ENCODE measurements at regions of chr11 and their contacts with region 1.

Region 1: GRCh38 chr11:128172046-128172878 is 415.1 kb downstream of the ETS1 start:
- DNase-seq: peak; percentile 65 to 74
- ATAC-seq: peak; percentile 64 to 92; a peak in 5 of 6 replicates
- H3K4me3 ChIP-seq: no peak overlapping the region
- H3K27ac ChIP-seq: peak overlapping the region; percentile 6 to 52; a peak in 2 of 6 replicates
- H3K4me1 ChIP-seq: peaks cover 22% of the 10 kb centered on the region
- CTCF ChIP-seq: peak; percentile 81
- EP300 ChIP-seq: no peak
- POLR2A ChIP-seq: no peak
- RAD21 ChIP-seq: peak; percentile 91 to 93

Region 2: DNA sequence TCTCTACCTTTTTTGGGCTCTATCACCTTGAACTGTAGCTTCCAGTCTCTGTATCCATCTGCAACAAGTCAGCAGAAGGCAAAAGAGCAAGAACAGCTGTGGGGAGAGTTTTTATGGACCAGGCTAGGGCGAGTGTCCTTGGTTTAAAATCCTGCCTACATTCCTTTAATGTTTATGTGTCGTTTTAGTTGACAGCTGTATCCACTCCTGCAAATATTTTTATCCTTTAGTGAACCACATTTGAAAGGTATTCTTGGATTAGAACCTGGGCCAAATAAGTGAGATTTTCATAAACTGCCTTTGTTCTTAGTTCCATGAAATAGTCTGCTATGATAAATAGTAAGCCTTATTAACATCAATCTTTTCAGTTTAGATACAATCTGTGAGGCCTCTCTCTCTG is 297.1 kb before region 1 on chr11:
- CTCF ChIA-PET with region 1: no interaction called
- POLR2A ChIA-PET with region 1: no interaction called
- DNase-seq: no peak
- ATAC-seq: no peak
- H3K4me3 ChIP-seq: no peak overlapping the region
- H3K27ac ChIP-seq: no peak overlapping the region
- H3K4me1 ChIP-seq: no peaks in the 10 kb centered on the region
- CTCF ChIP-seq: no peak
- EP300 ChIP-seq: no peak
- POLR2A ChIP-seq: no peak
- RAD21 ChIP-seq: no peak

Region 3: GRCh38 chr11:128318856-128319474 is 146.7 kb after region 1 on chr11:
- CTCF ChIA-PET with region 1: no interaction called
- POLR2A ChIA-PET with region 1: no interaction called
- DNase-seq: no peak
- ATAC-seq: no peak
- H3K4me3 ChIP-seq: no peak overlapping the region
- H3K27ac ChIP-seq: no peak overlapping the region
- H3K4me1 ChIP-seq: no peaks in the 10 kb centered on the region
- CTCF ChIP-seq: no peak
- EP300 ChIP-seq: no peak
- POLR2A ChIP-seq: no peak
- RAD21 ChIP-seq: no peak

Region 4: GRCh38 chr11:128342511-128343134 is 170.4 kb after region 1 on chr11:
- CTCF ChIA-PET with region 1: no interaction called
- POLR2A ChIA-PET with region 1: no interaction called
- DNase-seq: peak; percentile 19 to 27
- ATAC-seq: peak; percentile 50 to 72; a peak in 3 of 6 replicates
- H3K4me3 ChIP-seq: no peak overlapping the region
- H3K27ac ChIP-seq: peak overlapping the region in 1 of 2 experiments; percentile 25; a peak in 1 of 6 replicates
- H3K4me1 ChIP-seq: peaks cover 5% of the 10 kb centered on the region; the same call in 2 of the 3 replicates
- CTCF ChIP-seq: no peak
- EP300 ChIP-seq: no peak
- POLR2A ChIP-seq: no peak
- RAD21 ChIP-seq: no peak

Region 5: GRCh38 chr11:128483211-128483788 is 311.0 kb after region 1 on chr11:
- CTCF ChIA-PET with region 1: interaction called, 10 read pairs
- POLR2A ChIA-PET with region 1: no interaction called
- DNase-seq: no peak
- ATAC-seq: no peak
- H3K4me3 ChIP-seq: no peak overlapping the region
- H3K27ac ChIP-seq: no peak overlapping the region
- H3K4me1 ChIP-seq: peaks cover 2% of the 10 kb centered on the region; the same call in 1 of the 3 replicates
- CTCF ChIP-seq: no peak
- EP300 ChIP-seq: no peak
- POLR2A ChIP-seq: no peak
- RAD21 ChIP-seq: no peak